Naive thymus-derived CD4-positive, alpha-beta T cell (primary cell): ENCODE measurements at regions of chr1 and their contacts with region 1.

Region 1: DNA sequence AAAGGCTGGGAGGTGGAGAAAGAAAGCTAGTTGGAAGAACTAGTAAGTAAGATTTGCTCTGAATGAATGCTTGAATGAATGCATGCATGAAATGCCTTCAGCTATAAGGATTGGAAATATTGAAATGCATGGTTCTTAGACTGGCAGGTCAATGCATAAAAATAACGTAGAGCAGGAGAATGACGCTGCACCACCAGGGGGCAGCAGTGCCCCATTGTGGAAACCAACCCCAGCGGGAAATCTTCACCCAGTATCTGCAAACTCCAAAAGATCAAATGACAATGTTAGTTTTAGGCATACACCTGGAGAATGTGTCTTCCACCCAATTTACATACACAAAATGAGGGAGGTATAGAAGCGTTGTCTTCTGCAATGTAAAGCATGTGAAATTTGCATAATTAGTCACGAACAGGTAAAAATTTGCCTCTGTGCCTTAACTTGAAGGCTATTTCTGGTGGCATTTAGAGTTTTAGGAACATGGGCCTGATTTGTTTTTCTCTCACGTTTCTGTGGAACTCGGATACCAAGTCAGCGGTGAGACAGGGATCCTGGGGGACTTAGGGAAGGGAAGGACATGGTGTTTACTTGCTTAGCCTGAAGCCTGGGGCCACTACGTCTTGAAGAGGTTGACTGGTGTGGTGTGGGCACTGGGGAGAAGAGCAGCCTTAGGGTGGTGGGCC is 78.6 kb downstream of the HHAT start:
- DNase-seq: peak; percentile 39 to 76 (median 64)
- ATAC-seq: peak; percentile 79
- H3K4me3 ChIP-seq: no peak overlapping the region
- H3K4me3 Mint-ChIP-seq: no peak overlapping the region
- H3K27ac ChIP-seq: no peak overlapping the region
- H3K27ac Mint-ChIP-seq: no peak overlapping the region
- H3K4me1 ChIP-seq: no peaks in the 10 kb centered on the region
- H3K4me1 Mint-ChIP-seq: peaks cover 0 to 2% (median 0%) of the 10 kb centered on the region in 7 donors
- H3K27me3 ChIP-seq: no peaks in the 10 kb centered on the region
- H3K27me3 Mint-ChIP-seq: peaks cover 0 to 14% (median 0%) of the 10 kb centered on the region in 5 donors

Region 2: DNA sequence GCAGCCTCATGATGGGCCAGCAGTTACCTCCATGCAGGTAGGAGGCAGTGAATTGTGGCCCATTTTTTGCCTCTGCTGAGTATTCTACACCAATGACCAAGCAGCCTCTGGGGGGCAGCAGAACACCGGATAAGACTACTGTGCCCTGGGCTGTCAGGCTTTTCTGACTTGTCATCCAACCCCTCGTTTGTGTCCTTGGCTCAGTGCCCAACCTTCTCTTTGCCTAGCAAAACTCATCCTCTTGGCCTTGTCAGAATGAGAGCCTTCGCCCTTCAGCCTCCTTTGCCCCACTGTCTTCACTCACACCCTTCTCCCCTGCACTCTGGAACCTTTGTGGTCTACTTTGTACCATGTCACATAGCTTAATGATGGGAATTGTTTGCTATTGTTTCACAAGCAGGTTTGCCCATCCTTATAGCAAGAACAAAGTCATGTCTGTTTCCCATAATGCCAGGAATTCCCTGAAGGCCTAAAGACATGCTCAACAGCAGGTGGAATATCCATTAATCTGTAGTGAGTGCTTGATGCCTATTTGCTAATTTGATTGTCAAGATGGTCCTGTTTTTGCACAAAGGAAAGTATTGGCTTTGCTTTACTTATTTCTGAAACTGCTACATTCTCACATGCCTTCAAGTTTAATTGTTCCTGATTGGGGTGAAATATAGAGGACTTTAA is 177.2 kb after region 1 on chr1:
- CTCF ChIA-PET with region 1: no interaction called
- POLR2A ChIA-PET with region 1: no interaction called
- intact Hi-C with region 1: loop called in 1 of 2 experiments (anchors 1 kb)
- DNase-seq: peak; percentile 7 to 63 (median 47)
- ATAC-seq: peak; percentile 70
- H3K4me3 ChIP-seq: no peak overlapping the region
- H3K4me3 Mint-ChIP-seq: no peak overlapping the region
- H3K27ac ChIP-seq: no peak overlapping the region
- H3K27ac Mint-ChIP-seq: no peak overlapping the region
- H3K4me1 ChIP-seq: no peaks in the 10 kb centered on the region
- H3K4me1 Mint-ChIP-seq: peaks cover 0 to 8% (median 0%) of the 10 kb centered on the region in 7 donors
- H3K27me3 ChIP-seq: no peaks in the 10 kb centered on the region
- H3K27me3 Mint-ChIP-seq: peaks cover 0 to 6% (median 3%) of the 10 kb centered on the region in 5 donors

Region 3: GRCh38 chr1:210951279-210951678 is 543.9 kb after region 1 on chr1:
- CTCF ChIA-PET with region 1: no interaction called
- POLR2A ChIA-PET with region 1: no interaction called
- intact Hi-C with region 1: loop called in 1 of 2 experiments (anchors 5 kb)
- DNase-seq: no peak
- ATAC-seq: no peak
- H3K4me3 ChIP-seq: no peak overlapping the region
- H3K4me3 Mint-ChIP-seq: no peak overlapping the region
- H3K27ac ChIP-seq: no peak overlapping the region
- H3K27ac Mint-ChIP-seq: no peak overlapping the region
- H3K4me1 ChIP-seq: no peaks in the 10 kb centered on the region
- H3K4me1 Mint-ChIP-seq: no peaks in the 10 kb centered on the region
- H3K27me3 ChIP-seq: no peaks in the 10 kb centered on the region
- H3K27me3 Mint-ChIP-seq: peaks cover 0 to 11% (median 6%) of the 10 kb centered on the region in 5 donors

Region 4: GRCh38 chr1:211133836-211134669 is 726.7 kb after region 1 on chr1 and contains the start of gene KCNH1:
- CTCF ChIA-PET with region 1: interaction called, 5 read pairs
- POLR2A ChIA-PET with region 1: no interaction called
- intact Hi-C with region 1: loop called (anchors 1 kb)
- DNase-seq: peak; percentile 55 to 81 (median 71)
- ATAC-seq: peak; percentile 93
- H3K4me3 ChIP-seq: peak within 1 kb of the TSS; percentile 50
- H3K4me3 Mint-ChIP-seq: peak within 1 kb of the TSS; percentile 65 to 88 (median 78)
- H3K27ac ChIP-seq: no peak within 1 kb of the TSS
- H3K27ac Mint-ChIP-seq: no peak within 1 kb of the TSS
- H3K4me1 ChIP-seq: peaks cover 3 to 5% of the 10 kb centered on the region in 2 donors
- H3K4me1 Mint-ChIP-seq: peaks cover 0 to 10% (median 7%) of the 10 kb centered on the region in 7 donors
- H3K27me3 ChIP-seq: peaks cover 0 to 6% of the 10 kb centered on the region in 2 donors
- H3K27me3 Mint-ChIP-seq: peaks cover 19 to 89% (median 64%) of the 10 kb centered on the region in 5 donors
- total RNA-seq, gene KCNH1: not detected

Region 5: DNA sequence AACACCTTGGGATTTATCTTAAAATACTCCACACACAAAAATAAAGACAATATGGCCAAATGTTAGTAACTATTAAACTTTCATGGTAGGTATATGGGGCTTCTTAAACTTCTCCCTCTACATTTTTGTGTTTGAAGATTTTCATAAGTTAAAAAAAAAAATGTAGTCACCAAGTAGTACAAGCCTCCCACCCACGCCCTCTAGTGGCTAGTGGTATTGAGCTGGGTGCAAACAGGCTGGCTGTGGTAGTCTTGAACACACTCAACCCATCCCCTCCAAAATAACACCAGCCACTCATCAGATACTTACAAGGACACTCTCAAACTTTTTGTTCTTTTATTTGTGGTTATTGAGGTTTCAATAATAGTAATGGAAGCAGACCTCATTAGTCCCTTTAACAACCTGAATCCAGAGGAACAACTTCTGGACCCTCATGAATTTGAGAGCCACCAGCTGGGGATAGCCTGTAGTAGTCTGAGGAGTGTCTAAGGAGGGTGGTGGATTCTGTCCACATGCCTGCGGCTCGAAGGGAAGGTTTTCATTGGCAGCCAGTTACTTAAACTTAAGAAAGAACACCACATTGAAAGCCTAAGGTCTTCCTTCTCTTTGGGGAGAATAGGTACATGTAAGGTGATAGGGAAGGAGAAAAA is 1069.0 kb after region 1 on chr1:
- CTCF ChIA-PET with region 1: no interaction called
- POLR2A ChIA-PET with region 1: no interaction called
- intact Hi-C with region 1: loop called in 1 of 2 experiments (anchors 1 kb)
- DNase-seq: peak; percentile 43 to 81 (median 73)
- ATAC-seq: peak; percentile 89
- H3K4me3 ChIP-seq: no peak overlapping the region
- H3K4me3 Mint-ChIP-seq: no peak overlapping the region
- H3K27ac ChIP-seq: no peak overlapping the region
- H3K27ac Mint-ChIP-seq: no peak overlapping the region
- H3K4me1 ChIP-seq: no peaks in the 10 kb centered on the region
- H3K4me1 Mint-ChIP-seq: peaks cover 0 to 4% (median 0%) of the 10 kb centered on the region in 7 donors
- H3K27me3 ChIP-seq: no peaks in the 10 kb centered on the region
- H3K27me3 Mint-ChIP-seq: peaks cover 6 to 42% (median 24%) of the 10 kb centered on the region in 5 donors

Region 6: DNA sequence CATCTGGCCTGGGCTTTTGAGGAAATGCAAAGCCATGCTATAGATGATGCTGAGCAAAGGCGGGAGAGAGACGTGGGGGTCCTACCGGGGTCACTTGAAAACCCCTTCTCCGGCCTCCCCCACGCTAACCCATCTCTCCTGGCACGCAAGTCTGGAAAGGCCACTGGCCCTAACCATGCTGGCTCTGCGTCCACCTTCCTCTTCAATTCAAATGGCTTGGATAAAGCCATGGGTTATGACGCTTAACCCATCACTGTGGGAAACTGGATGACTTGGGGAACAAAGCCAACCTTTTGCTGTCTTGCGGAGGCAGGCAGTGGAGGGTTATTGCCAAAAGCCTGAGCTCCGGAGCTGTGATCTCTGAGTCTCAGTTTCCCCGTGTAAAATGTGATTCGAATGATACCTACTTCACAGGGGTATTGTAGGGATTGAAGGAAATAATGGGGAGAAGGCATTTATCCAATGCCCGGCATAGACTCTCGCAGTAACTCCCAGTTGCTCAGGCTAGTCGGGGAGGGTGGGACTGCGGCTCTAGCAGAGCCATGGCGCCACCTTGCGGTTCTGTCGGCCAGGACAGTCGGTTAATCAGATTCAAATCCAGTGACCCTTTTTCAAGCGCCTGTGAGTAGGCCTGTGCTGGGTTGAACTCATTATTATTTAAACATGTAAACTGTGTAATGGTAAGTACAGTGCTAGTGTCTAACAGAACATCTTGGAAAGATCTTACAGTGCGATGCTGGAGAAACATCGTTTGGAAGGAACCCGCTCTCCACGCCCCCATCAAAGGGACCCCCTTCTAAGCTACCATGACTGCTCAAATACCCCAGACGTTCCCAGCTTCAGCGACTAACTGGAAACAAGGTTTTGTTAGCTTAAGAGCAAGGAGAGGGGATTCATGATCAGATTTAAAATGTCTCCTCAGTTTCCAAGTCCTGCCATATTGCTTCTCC is 1247.8 kb after region 1 on chr1:
- CTCF ChIA-PET with region 1: no interaction called
- POLR2A ChIA-PET with region 1: no interaction called
- intact Hi-C with region 1: loop called in 1 of 2 experiments (anchors 5 kb)
- DNase-seq: peak; percentile 60 to 82 (median 71)
- ATAC-seq: peak; percentile 95
- H3K4me3 ChIP-seq: no peak overlapping the region
- H3K4me3 Mint-ChIP-seq: no peak overlapping the region
- H3K27ac ChIP-seq: no peak overlapping the region
- H3K27ac Mint-ChIP-seq: no peak overlapping the region
- H3K4me1 ChIP-seq: no peaks in the 10 kb centered on the region
- H3K4me1 Mint-ChIP-seq: peaks cover 0 to 5% (median 0%) of the 10 kb centered on the region in 7 donors
- H3K27me3 ChIP-seq: no peaks in the 10 kb centered on the region
- H3K27me3 Mint-ChIP-seq: peaks cover 0 to 13% (median 0%) of the 10 kb centered on the region in 5 donors